ENCODE measurements at regions of chr3 and their contacts with region 1.

Region 1: GRCh38 chr3:116020495-116020894 is 397.2 kb downstream of the GAP43 start:
- DNase-seq: no peak
- H3K4me3 ChIP-seq: no peak overlapping the region
- H3K27ac ChIP-seq: no peak overlapping the region
- H3K4me1 ChIP-seq: no peaks in the 10 kb centered on the region
- H3K27me3 ChIP-seq: no peaks in the 10 kb centered on the region
- CTCF ChIP-seq: no peak

Region 2: DNA sequence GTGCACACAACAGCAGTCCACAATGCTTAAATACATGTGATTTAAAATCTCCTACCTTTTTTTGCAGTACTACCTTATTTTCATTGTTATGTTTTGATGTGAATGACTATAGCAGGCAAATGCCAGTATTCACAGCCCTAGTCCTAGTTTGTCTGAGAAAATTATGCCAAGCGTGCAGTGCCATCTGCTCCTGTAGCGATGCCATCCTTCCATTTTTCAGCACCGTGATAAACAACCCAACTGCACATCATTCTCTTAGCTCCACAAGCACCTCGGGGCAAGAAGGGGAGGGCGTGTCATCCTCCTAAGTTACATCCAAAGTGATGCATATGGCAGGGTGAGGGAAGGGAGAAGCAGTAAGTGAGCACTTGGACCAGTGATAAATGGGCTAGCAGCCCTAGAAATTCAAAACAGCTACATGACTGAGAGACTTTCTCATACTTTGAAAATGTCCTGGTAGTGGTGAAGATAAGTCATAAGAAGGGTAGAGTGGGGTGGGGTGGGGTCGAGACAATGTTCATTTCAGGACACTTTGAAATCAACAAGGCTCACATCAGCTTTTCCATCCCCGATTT is 226.0 kb after region 1 on chr3:
- CTCF ChIA-PET with region 1: no interaction called
- POLR2A ChIA-PET with region 1: interaction called, 19 read pairs
- intact Hi-C with region 1: no loop called
- DNase-seq: no peak
- H3K4me3 ChIP-seq: no peak overlapping the region
- H3K27ac ChIP-seq: no peak overlapping the region
- H3K4me1 ChIP-seq: no peaks in the 10 kb centered on the region
- H3K27me3 ChIP-seq: no peaks in the 10 kb centered on the region
- CTCF ChIP-seq: no peak

Region 3: DNA sequence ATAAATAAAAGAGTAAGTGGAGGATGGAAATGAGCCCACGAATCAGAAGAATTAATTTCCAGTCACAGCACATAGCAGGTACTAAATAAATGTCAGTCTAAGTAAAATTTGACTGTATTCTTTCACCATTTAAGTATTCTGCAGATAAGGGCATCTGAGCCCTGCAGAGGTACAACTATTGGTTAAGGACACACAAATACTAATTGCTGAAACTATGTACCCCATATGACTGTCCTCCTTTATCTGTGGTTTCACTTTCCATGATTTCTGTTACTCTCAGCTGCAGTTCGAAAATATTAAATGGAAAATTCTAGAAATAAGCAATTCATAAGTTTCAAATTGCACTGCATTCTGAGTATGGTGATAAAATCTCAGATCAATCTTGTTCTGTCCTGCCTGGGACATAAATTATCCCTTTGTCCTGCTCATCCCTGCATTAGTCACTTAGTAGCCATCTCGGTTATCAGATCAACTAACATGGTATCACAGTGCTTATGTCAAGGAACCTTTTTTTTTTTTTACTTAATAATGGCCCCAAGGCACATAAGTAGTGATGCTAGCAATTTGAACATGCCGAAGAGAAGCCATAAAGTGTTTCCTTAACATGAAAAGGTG is 329.7 kb after region 1 on chr3:
- CTCF ChIA-PET with region 1: no interaction called
- POLR2A ChIA-PET with region 1: interaction called, 11 read pairs
- intact Hi-C with region 1: no loop called
- DNase-seq: no peak
- H3K4me3 ChIP-seq: no peak overlapping the region
- H3K27ac ChIP-seq: no peak overlapping the region
- H3K4me1 ChIP-seq: no peaks in the 10 kb centered on the region
- H3K27me3 ChIP-seq: no peaks in the 10 kb centered on the region
- CTCF ChIP-seq: no peak

Region 4: DNA sequence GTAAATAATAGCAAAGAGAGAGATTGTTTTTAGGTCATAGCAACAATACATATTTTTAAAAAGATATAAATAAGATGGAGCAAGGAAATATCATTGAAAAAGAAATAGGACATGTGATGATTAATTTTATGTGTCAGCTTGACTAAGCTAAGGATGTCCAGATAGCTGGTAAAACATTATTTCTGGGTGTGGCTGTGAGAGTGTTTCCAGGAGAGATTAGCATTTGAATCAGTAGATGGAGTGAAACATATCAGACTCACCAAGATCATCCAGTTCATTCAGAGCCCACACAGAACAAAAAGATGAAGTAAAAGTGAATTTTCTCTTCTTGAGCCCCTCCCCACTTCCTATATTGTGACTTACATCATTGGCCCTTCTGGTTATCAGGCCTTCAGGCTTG is 627.5 kb after region 1 on chr3:
- CTCF ChIA-PET with region 1: no interaction called
- POLR2A ChIA-PET with region 1: no interaction called
- intact Hi-C with region 1: no loop called
- DNase-seq: no peak
- H3K4me3 ChIP-seq: no peak overlapping the region
- H3K27ac ChIP-seq: no peak overlapping the region
- H3K4me1 ChIP-seq: no peaks in the 10 kb centered on the region
- H3K27me3 ChIP-seq: no peaks in the 10 kb centered on the region
- CTCF ChIP-seq: no peak